Motor neuron (in vitro differentiated cells): ENCODE measurements at regions of chr1 and their contacts with region 1.

Region 1: DNA sequence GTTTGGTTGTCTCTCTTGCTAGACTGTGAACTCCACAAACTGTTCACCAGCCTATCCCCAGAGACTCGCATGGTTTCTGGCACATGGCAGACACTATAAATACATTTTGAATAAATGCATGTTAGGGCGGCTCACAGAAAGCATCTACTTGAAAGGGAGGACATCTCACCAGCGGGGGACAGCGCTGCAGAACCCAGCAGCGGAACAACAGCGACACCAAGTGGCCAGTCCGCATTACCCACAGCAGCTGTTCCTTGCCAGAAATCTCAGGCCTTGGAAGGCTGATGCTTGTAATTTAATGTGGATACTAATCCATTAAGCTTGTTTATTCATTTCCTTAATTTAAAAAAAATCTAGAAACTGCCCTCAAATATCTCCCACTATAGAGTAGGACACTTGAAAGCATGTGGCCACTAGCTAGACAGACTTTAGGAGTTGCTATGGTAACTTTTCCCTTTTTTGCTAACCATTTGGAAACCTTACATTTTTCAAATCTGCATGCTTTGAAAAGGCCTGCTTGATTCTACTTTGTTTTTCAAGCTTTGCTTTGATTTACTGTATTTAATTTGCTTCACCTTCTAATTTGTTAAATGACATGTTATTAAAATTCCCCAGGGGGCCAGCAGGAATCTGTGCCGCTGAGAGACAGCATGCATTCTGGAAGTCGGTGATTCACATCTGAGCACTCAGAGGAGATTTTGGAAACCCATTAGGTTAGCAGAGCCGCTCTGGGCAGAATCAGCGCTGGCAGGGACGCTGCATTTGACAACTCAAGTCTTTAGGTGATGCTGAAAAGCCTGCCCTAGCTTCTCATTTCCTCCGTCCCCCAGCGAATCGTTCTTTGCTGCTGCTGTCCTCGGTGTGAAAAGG is 63.5 kb upstream of the SSX2IP start:
- ATAC-seq: peak; percentile 88 to 98 (median 96)
- H3K4me3 ChIP-seq: no peak overlapping the region
- H3K27ac ChIP-seq: no peak overlapping the region
- H3K4me1 ChIP-seq: peaks cover 0 to 18% of the 10 kb centered on the region in 2 donors

Region 2: DNA sequence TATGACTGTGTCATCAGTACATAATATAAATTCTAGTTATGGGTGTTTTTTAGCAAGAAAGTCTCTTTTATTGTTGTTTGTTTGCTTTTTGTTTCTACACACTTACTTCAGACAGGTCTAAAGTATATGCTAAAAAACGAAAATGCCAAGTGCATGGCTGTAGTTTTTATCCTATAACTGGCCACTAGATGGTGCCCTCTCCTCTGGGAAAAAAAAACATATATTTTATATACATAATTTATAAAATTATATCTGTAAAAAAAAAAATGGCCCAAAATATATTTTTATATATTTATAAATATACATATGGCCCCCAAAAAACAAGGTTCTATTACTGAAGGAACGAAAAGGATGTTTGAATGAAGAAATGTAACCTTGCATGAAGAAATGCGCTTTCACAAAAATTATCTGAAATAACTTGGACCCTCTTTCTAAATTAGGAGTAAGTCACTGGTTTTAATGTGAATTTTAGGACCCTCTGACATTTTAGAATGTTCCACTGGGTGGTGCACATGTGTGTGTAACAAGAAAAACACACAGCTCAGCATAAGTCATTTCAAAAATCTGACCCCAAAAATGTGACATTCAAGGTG is 848.3 kb before region 1 on chr1:
- in situ Hi-C with region 1: loop called in 4 of 9 experiments (anchors 25 kb)
- ATAC-seq: no peak
- H3K4me3 ChIP-seq: no peak overlapping the region
- H3K27ac ChIP-seq: no peak overlapping the region
- H3K4me1 ChIP-seq: no peaks in the 10 kb centered on the region

Region 3: DNA sequence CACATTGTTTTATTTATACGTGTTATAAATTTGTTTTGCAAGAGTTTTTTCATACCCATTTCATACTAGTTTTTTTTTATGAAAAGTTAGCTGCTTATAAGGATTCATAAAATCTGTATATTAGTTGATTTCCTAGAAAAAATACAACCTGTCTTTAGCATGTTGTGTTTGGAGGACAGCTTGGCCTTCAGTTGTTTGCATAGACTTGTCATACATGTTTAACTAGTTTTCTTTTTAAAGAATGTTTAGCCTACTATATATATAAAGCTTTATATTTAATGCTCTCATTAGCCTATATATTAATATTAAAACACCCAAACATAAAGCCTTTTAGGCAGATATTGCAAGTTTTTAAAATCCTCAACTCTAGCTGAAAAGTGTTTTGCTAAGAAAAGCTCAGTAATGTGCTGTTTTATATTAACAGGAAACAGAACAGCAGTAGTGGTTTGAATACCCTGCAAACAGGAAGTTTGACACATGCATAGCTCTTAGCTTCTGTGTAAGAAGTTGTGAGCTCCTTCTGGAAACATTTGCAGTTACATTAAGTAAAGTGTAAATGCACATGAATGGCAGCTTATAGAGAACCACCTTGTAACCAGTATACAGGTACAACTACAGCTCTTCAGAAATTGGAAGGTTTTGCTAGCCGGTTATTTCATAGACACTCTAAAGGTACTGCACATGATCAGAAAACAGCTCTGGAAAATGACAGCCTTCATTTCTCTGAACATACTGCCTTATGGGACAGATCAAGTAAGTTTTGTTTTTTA is 609.8 kb before region 1 on chr1 and contains the start of gene PRKACB:
- in situ Hi-C with region 1: loop called in 2 of 9 experiments (anchors 25 kb)
- ATAC-seq: no peak
- H3K4me3 ChIP-seq: no peak within 1 kb of the TSS
- H3K27ac ChIP-seq: no peak within 1 kb of the TSS
- H3K4me1 ChIP-seq: no peaks in the 10 kb centered on the region
- total RNA-seq, gene PRKACB: 21.7 to 120 (median 51.3) TPM

Region 4: DNA sequence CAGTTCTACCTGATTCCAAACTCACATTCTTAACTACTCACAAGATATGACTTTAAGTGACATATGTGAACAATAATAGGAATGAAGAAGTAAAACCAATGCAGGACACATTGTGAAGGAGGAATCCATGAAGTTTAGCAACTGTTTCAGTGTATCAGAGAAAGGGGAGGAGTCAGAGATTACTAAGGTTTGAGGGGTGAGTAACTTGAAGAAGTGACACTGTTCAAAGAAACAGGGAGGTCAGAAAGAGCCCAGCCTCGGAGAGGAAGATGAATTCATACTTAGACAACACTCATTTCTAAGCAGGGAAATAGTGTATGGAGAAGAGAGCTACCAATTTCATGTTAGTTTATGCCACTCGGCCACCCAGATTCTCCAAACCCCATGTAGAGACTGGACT is 302.8 kb before region 1 on chr1:
- in situ Hi-C with region 1: loop called in 2 of 9 experiments (anchors 25 kb)
- ATAC-seq: no peak
- H3K4me3 ChIP-seq: no peak overlapping the region
- H3K27ac ChIP-seq: no peak overlapping the region
- H3K4me1 ChIP-seq: no peaks in the 10 kb centered on the region

Region 5: GRCh38 chr1:84632673-84633434 is 120.9 kb before region 1 on chr1:
- in situ Hi-C with region 1: loop called in 2 of 9 experiments (anchors 10 to 25 kb)
- ATAC-seq: peak; percentile 84 to 97 (median 94)
- H3K4me3 ChIP-seq: no peak overlapping the region
- H3K27ac ChIP-seq: no peak overlapping the region
- H3K4me1 ChIP-seq: peaks cover 0 to 3% of the 10 kb centered on the region in 2 donors